Activated CD8-positive, alpha-beta T cell treated with anti-CD3 and anti-CD28 coated beads for 36 hours (primary cell): ENCODE measurements at regions of chr3 and their contacts with region 1.

Region 1: DNA sequence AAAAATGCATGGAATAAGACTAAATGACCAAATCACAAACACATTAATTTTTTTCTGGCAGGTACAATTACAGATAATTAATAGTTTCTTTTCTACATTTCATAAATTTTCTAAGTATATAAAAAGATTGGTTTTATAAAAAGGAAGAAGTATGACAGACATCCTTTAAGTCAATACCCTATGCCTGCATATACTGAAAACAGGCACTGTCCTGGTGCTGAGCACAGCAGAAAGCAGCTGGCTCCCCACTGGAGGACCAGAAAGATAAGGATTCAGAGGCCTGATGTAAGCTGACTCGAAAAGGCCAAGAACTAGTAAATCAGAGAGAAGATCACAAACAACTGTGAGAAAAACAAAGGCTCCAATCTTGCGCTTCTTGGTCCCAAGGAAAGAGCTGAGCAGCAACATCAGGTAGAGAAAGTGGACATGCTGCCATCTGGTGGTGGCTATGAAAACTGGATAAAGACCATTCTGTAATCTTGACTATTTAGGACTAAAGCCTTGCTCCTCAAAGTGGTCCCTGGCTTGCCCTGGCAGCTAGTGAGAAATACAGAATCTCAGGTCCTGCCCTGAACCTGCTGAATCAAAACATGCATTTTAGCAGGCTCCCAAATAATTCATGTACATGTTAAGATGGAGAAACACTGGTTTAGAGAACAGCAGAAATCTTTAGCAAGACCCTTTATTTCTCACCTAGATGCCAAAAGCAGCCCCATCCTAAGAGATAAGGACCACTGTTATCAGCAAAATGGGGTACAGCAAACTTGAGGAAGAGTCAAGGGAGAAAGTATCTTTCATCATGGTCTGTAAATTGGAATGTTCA is 76.0 kb downstream of the TRANK1 start:
- DNase-seq: peak; percentile 63
- ATAC-seq: peak; percentile 85
- H3K4me3 Mint-ChIP-seq: no peak overlapping the region
- H3K27ac Mint-ChIP-seq: no peak overlapping the region
- H3K4me1 Mint-ChIP-seq: peaks cover 13% of the 10 kb centered on the region
- H3K27me3 Mint-ChIP-seq: no peaks in the 10 kb centered on the region
- CTCF ChIP-seq: peak; percentile 81

Region 2: GRCh38 chr3:36380221-36381031 is 488.4 kb before region 1 on chr3 and contains the start of gene STAC:
- CTCF ChIA-PET with region 1: no interaction called
- POLR2A ChIA-PET with region 1: no interaction called
- intact Hi-C with region 1: no loop called
- DNase-seq: peak; percentile 19
- ATAC-seq: peak; percentile 74
- H3K4me3 Mint-ChIP-seq: peak within 1 kb of the TSS; percentile 39
- H3K27ac Mint-ChIP-seq: no peak within 1 kb of the TSS
- H3K4me1 Mint-ChIP-seq: peaks cover 5% of the 10 kb centered on the region
- H3K27me3 Mint-ChIP-seq: peaks cover 25% of the 10 kb centered on the region
- CTCF ChIP-seq: no peak
- total RNA-seq, gene STAC: not detected

Region 3: DNA sequence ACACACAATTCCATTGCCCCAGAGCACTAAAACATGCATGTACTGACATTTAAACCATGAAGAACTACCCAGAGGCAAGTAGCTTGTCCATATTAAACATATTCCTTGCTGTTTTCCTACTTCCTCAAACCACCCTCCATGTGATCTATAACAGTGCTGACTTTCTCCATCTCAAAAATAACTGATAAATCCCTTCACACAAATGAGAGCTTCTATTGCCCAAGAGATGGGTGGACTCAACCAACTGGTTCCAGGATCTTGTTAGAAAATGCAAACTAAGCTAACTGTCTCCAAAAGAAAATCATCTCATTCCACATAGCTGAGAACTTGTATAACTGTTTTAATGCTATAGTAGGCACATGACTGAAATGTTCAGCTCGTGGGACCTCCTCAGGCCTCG is 134.1 kb before region 1 on chr3:
- CTCF ChIA-PET with region 1: interaction called, 29 read pairs
- POLR2A ChIA-PET with region 1: no interaction called
- intact Hi-C with region 1: loop called (anchors 1 kb)
- DNase-seq: no peak
- ATAC-seq: no peak
- H3K4me3 Mint-ChIP-seq: no peak overlapping the region
- H3K27ac Mint-ChIP-seq: no peak overlapping the region
- H3K4me1 Mint-ChIP-seq: no peaks in the 10 kb centered on the region
- H3K27me3 Mint-ChIP-seq: no peaks in the 10 kb centered on the region
- CTCF ChIP-seq: no peak

Region 4: GRCh38 chr3:36843065-36844051 is 25.5 kb before region 1 on chr3:
- CTCF ChIA-PET with region 1: interaction called, 15 read pairs
- POLR2A ChIA-PET with region 1: interaction called, 7 read pairs
- intact Hi-C with region 1: no loop called
- DNase-seq: peak; percentile 81
- ATAC-seq: peak; percentile 85
- H3K4me3 Mint-ChIP-seq: no peak overlapping the region
- H3K27ac Mint-ChIP-seq: peak overlapping the region; percentile 27
- H3K4me1 Mint-ChIP-seq: peaks cover 26% of the 10 kb centered on the region
- H3K27me3 Mint-ChIP-seq: no peaks in the 10 kb centered on the region
- CTCF ChIP-seq: peak; percentile 73

Region 5: GRCh38 chr3:36893137-36893557 is 24.3 kb after region 1 on chr3:
- CTCF ChIA-PET with region 1: interaction called, 12 read pairs
- POLR2A ChIA-PET with region 1: interaction called, 5 read pairs
- intact Hi-C with region 1: no loop called
- DNase-seq: peak; percentile 35
- ATAC-seq: peak; percentile 86
- H3K4me3 Mint-ChIP-seq: no peak overlapping the region
- H3K27ac Mint-ChIP-seq: peak overlapping the region; percentile 83
- H3K4me1 Mint-ChIP-seq: peaks cover 47% of the 10 kb centered on the region
- H3K27me3 Mint-ChIP-seq: no peaks in the 10 kb centered on the region
- CTCF ChIP-seq: no peak

Region 6: GRCh38 chr3:36944012-36944640 is 75.3 kb after region 1 on chr3:
- CTCF ChIA-PET with region 1: interaction called, 13 read pairs
- POLR2A ChIA-PET with region 1: no interaction called
- intact Hi-C with region 1: no loop called
- DNase-seq: peak; percentile 52
- ATAC-seq: peak; percentile 59
- H3K4me3 Mint-ChIP-seq: peak overlapping the region; percentile 77
- H3K27ac Mint-ChIP-seq: peak overlapping the region; percentile 57
- H3K4me1 Mint-ChIP-seq: peaks cover 26% of the 10 kb centered on the region
- H3K27me3 Mint-ChIP-seq: no peaks in the 10 kb centered on the region
- CTCF ChIP-seq: no peak